T-cell (primary cell): ENCODE measurements at regions of chr4 and their contacts with region 1.

Region 1: GRCh38 chr4:185500035-185500434 is 28.5 kb upstream of the CCDC110 start:
- DNase-seq: no peak
- ATAC-seq: no peak
- H3K4me3 ChIP-seq: no peak overlapping the region
- H3K4me3 Mint-ChIP-seq: no peak overlapping the region
- H3K27ac ChIP-seq: no peak overlapping the region
- H3K27ac Mint-ChIP-seq: no peak overlapping the region
- H3K4me1 ChIP-seq: no peaks in the 10 kb centered on the region
- H3K4me1 Mint-ChIP-seq: no peaks in the 10 kb centered on the region
- H3K27me3 ChIP-seq: peaks cover 0 to 13% of the 10 kb centered on the region in 2 experiments
- H3K27me3 Mint-ChIP-seq: peaks cover 15 to 39% of the 10 kb centered on the region in 2 donors

Region 2: DNA sequence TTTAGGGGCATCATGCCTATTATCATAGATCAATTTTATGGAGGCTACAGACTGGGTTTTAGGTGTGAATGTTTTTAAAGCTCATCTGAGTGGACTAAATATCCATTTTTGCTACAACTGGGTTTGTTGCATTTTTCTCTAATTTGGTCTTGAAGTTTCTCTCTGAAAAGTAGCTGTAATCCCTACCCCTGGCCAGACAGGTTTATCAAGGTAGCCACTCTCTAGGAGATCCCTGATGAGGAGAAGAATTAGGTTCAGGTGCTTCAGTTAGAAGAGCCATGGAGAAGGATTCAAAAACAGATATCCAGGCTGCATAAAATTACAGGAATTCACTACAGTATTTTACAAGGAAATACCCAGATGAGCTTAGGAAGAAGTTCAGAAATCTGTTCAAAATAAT is 471.2 kb after region 1 on chr4:
- CTCF ChIA-PET with region 1: interaction called in 1 of 2 experiments, 16 read pairs
- POLR2A ChIA-PET with region 1: no interaction called
- DNase-seq: no peak
- ATAC-seq: no peak
- H3K4me3 ChIP-seq: no peak overlapping the region
- H3K4me3 Mint-ChIP-seq: no peak overlapping the region
- H3K27ac ChIP-seq: no peak overlapping the region
- H3K27ac Mint-ChIP-seq: no peak overlapping the region
- H3K4me1 ChIP-seq: no peaks in the 10 kb centered on the region
- H3K4me1 Mint-ChIP-seq: no peaks in the 10 kb centered on the region
- H3K27me3 ChIP-seq: peaks cover 0 to 16% of the 10 kb centered on the region in 2 experiments
- H3K27me3 Mint-ChIP-seq: peaks cover 6 to 10% of the 10 kb centered on the region in 2 donors

Region 3: GRCh38 chr4:186676531-186677161 is 1176.6 kb after region 1 on chr4:
- CTCF ChIA-PET with region 1: no interaction called
- POLR2A ChIA-PET with region 1: no interaction called
- DNase-seq: no peak
- ATAC-seq: no peak
- H3K4me3 ChIP-seq: no peak overlapping the region
- H3K4me3 Mint-ChIP-seq: no peak overlapping the region
- H3K27ac ChIP-seq: no peak overlapping the region
- H3K27ac Mint-ChIP-seq: no peak overlapping the region
- H3K4me1 ChIP-seq: no peaks in the 10 kb centered on the region
- H3K4me1 Mint-ChIP-seq: no peaks in the 10 kb centered on the region
- H3K27me3 ChIP-seq: no peaks in the 10 kb centered on the region
- H3K27me3 Mint-ChIP-seq: no peaks in the 10 kb centered on the region